Activated CD4-positive, alpha-beta T cell treated with anti-CD3 and anti-CD28 coated beads for 36 hours (primary cell): ENCODE measurements at regions of chr4 and their contacts with region 1.

Region 1: DNA sequence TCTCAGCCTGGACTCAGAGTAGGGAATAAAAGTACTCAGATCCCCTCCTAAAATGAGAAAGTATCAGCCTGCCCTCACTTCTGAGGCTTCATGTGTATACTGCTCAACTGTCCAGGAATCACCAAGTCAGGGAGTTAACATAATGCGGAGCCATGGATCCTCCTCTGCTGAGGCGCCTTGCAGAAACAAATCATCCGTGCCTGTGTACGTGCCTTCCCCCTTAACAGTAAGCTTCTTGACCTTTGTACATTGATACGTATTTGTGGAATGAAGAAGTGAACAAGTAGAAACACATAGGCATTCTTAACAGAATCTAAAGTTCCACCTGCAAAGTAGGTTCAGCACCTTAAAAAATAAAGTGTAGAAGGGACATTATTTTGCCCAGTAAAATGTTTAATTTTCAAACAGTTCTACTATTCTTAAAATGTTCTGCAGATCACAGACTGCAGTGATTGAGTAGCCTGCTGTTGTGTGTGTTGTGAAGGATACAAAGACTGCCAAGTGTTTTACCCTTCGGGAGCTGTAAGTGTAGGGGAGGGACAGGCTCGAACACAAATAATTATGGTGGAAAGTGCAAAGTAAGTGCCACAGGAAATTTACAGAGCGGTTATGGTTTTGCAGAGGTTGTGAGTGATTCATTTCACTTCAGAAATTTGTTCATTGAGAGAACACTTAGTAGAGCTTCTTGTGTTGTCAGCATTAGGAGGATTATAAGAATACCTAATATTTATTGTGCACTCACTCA is 61.9 kb downstream of the ARHGAP10 start:
- DNase-seq: peak; percentile 28
- ATAC-seq: peak; percentile 71
- H3K4me3 Mint-ChIP-seq: peak overlapping the region; percentile 13
- H3K27ac Mint-ChIP-seq: peak overlapping the region; percentile 77
- H3K4me1 Mint-ChIP-seq: peaks cover 34% of the 10 kb centered on the region
- H3K27me3 Mint-ChIP-seq: no peaks in the 10 kb centered on the region

Region 2: GRCh38 chr4:147731580-147732517 is 61.9 kb before region 1 on chr4 and contains the start of gene ARHGAP10:
- CTCF ChIA-PET with region 1: no interaction called
- POLR2A ChIA-PET with region 1: no interaction called
- intact Hi-C with region 1: loop called (anchors 2 kb)
- DNase-seq: peak; percentile 83
- ATAC-seq: peak; percentile 82
- H3K4me3 Mint-ChIP-seq: peak within 1 kb of the TSS; percentile 85
- H3K27ac Mint-ChIP-seq: peak within 1 kb of the TSS; percentile 87
- H3K4me1 Mint-ChIP-seq: peaks cover 45% of the 10 kb centered on the region
- H3K27me3 Mint-ChIP-seq: peaks cover 3% of the 10 kb centered on the region
- total RNA-seq, gene ARHGAP10: 6.1 to 6.2 TPM

Region 3: GRCh38 chr4:147768113-147768512 is 25.6 kb before region 1 on chr4:
- CTCF ChIA-PET with region 1: interaction called, 4 read pairs
- POLR2A ChIA-PET with region 1: no interaction called
- intact Hi-C with region 1: loop called in 1 of 2 experiments (anchors 1 kb)
- DNase-seq: peak; percentile 42
- ATAC-seq: peak; percentile 72
- H3K4me3 Mint-ChIP-seq: no peak overlapping the region
- H3K27ac Mint-ChIP-seq: no peak overlapping the region
- H3K4me1 Mint-ChIP-seq: peaks cover 20% of the 10 kb centered on the region
- H3K27me3 Mint-ChIP-seq: no peaks in the 10 kb centered on the region

Region 4: GRCh38 chr4:147843162-147843561 is 49.4 kb after region 1 on chr4:
- CTCF ChIA-PET with region 1: no interaction called
- POLR2A ChIA-PET with region 1: no interaction called
- intact Hi-C with region 1: loop called in 1 of 2 experiments (anchors 1 kb)
- DNase-seq: peak; percentile 29
- ATAC-seq: peak; percentile 74
- H3K4me3 Mint-ChIP-seq: no peak overlapping the region
- H3K27ac Mint-ChIP-seq: no peak overlapping the region
- H3K4me1 Mint-ChIP-seq: no peaks in the 10 kb centered on the region
- H3K27me3 Mint-ChIP-seq: no peaks in the 10 kb centered on the region